Activated T-helper 2 cell treated with anti-CD3 and anti-CD28 coated beads, Interferon-gamma antibody, Interleukin-2, Interleukin-4, amounts not matched to agents 10 μg/mL and 5 μg/mL and 100 μg/mL, durations not matched to agents 14 hours and 24 hours and 36 hours (primary cell): ENCODE measurements at regions of chr16 and their contacts with region 1.

Region 1: GRCh38 chr16:89171463-89172170 is at the start of gene CDH15:
- DNase-seq: peak; percentile 88
- H3K4me3 Mint-ChIP-seq: peak within 1 kb of the TSS; percentile 62
- H3K27ac Mint-ChIP-seq: no peak within 1 kb of the TSS
- H3K4me1 Mint-ChIP-seq: peaks cover 4% of the 10 kb centered on the region
- H3K27me3 Mint-ChIP-seq: peaks cover 4% of the 10 kb centered on the region
- total RNA-seq, gene CDH15: not detected in 2 replicates

Region 2: GRCh38 chr16:88737298-88738150 is 434.1 kb before region 1 on chr16:
- intact Hi-C with region 1: loop called (anchors 5 kb)
- DNase-seq: peak; percentile 54
- H3K4me3 Mint-ChIP-seq: no peak overlapping the region
- H3K27ac Mint-ChIP-seq: no peak overlapping the region
- H3K4me1 Mint-ChIP-seq: no peaks in the 10 kb centered on the region
- H3K27me3 Mint-ChIP-seq: no peaks in the 10 kb centered on the region

Region 3: GRCh38 chr16:88811769-88812512 is 359.7 kb before region 1 on chr16 and contains the start of gene APRT:
- intact Hi-C with region 1: loop called (anchors 1 kb)
- DNase-seq: peak; percentile 97
- H3K4me3 Mint-ChIP-seq: peak within 1 kb of the TSS; percentile 90
- H3K27ac Mint-ChIP-seq: peak within 1 kb of the TSS; percentile 97
- H3K4me1 Mint-ChIP-seq: peaks cover 9% of the 10 kb centered on the region
- H3K27me3 Mint-ChIP-seq: no peaks in the 10 kb centered on the region
- total RNA-seq, gene APRT: 294 and 300 TPM in 2 replicates

Region 4: GRCh38 chr16:88941913-88942909 is 229.4 kb before region 1 on chr16:
- intact Hi-C with region 1: loop called (anchors 1 kb)
- DNase-seq: peak; percentile 31
- H3K4me3 Mint-ChIP-seq: no peak overlapping the region
- H3K27ac Mint-ChIP-seq: no peak overlapping the region
- H3K4me1 Mint-ChIP-seq: no peaks in the 10 kb centered on the region
- H3K27me3 Mint-ChIP-seq: peaks cover 36% of the 10 kb centered on the region

Region 5: GRCh38 chr16:89193021-89193575 is 21.5 kb after region 1 on chr16:
- intact Hi-C with region 1: loop called (anchors 1 kb)
- DNase-seq: peak; percentile 55
- H3K4me3 Mint-ChIP-seq: no peak overlapping the region
- H3K27ac Mint-ChIP-seq: no peak overlapping the region
- H3K4me1 Mint-ChIP-seq: no peaks in the 10 kb centered on the region
- H3K27me3 Mint-ChIP-seq: no peaks in the 10 kb centered on the region

Region 6: GRCh38 chr16:89222931-89223330 is 51.3 kb after region 1 on chr16:
- intact Hi-C with region 1: no loop called
- DNase-seq: no peak
- H3K4me3 Mint-ChIP-seq: no peak overlapping the region
- H3K27ac Mint-ChIP-seq: no peak overlapping the region
- H3K4me1 Mint-ChIP-seq: peaks cover 4% of the 10 kb centered on the region
- H3K27me3 Mint-ChIP-seq: no peaks in the 10 kb centered on the region